ENCODE measurements at regions of chr19 and their contacts with region 1.

Region 1: DNA sequence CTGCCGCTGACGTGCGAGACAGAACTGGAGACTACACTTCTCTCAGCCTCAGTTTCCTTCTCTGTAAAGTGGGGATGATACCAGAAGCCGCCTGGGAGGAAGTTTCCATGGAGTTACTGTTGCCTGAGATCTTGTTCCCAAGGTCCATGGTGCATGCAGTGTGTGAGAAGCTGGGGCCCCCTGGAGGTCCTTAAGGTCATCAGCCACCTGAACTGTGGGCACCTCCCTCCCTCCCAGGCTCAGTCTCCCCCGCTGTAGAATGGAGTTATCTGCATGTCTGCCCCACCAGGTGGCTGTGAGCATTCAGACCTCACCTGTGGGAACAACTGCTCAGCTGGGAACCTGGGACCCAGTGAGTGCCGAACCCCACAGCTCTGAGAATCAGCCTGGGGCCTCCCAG is 2.7 kb downstream of the CRX start:
- DNase-seq: no peak
- H3K4me3 ChIP-seq: no peak overlapping the region
- CTCF ChIP-seq: no peak

Region 2: DNA sequence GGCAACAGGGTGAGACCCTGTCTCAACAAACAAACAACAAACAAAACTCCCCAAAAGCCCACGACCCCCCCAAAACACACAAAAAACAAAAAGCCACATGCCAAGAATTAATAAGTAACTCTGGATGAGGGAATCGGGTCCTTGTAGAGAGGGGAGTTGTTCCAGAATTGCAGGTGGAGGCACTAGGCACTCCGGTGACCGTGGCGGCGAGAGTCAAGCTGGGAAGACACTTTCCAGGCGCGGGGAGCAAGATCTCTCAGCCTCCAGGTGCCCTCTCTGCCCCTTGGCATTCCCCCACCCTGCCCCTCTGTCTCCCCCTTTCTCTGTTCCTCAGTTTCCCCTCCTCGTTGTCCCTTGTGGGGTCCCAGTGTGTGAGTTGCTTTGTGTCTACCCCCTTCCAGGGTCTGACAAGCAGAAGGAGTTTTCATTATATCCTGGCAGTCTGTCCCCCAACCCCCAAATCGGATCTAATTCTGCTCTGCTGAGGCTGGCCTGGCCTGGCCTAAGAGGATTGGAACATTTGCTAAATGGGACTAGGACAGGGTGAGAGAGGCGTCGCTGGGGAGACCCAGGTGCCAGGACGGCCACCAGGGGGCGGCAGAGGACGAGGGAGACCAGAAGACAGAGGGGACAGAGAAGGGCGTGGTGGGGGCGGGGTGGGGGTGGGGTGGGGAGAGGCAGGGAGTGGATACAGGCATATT is 10.9 kb before region 1 on chr19:
- CTCF ChIA-PET with region 1: interaction called, 24 read pairs
- POLR2A ChIA-PET with region 1: no interaction called
- DNase-seq: no peak
- H3K4me3 ChIP-seq: no peak overlapping the region
- CTCF ChIP-seq: peak; percentile 75